CD8-positive, alpha-beta T cell (primary cell): ENCODE measurements at regions of chr5 and their contacts with region 1.

Region 1: GRCh38 chr5:132495667-132496190 is 5.2 kb upstream of the IRF1 start:
- DNase-seq: peak in 8 of 9 experiments; percentile 54 to 86 (median 70)
- ATAC-seq: peak; percentile 32
- H3K4me3 ChIP-seq: peak overlapping the region; percentile 67 to 86
- H3K4me3 Mint-ChIP-seq: peak overlapping the region; percentile 97
- H3K27ac ChIP-seq: peak overlapping the region; percentile 68 to 86
- H3K27ac Mint-ChIP-seq: peak overlapping the region; percentile 94
- H3K4me1 ChIP-seq: peaks cover 69% of the 10 kb centered on the region
- H3K4me1 Mint-ChIP-seq: peaks cover 69% of the 10 kb centered on the region
- H3K27me3 ChIP-seq: no peaks in the 10 kb centered on the region
- H3K27me3 Mint-ChIP-seq: no peaks in the 10 kb centered on the region
- CTCF ChIP-seq: no peak

Region 2: GRCh38 chr5:132394667-132395259 is 101.0 kb before region 1 on chr5:
- CTCF ChIA-PET with region 1: interaction called, 425 read pairs
- POLR2A ChIA-PET with region 1: interaction called, 10 read pairs
- intact Hi-C with region 1: no loop called
- DNase-seq: no peak
- ATAC-seq: no peak
- H3K4me3 ChIP-seq: no peak overlapping the region
- H3K4me3 Mint-ChIP-seq: no peak overlapping the region
- H3K27ac ChIP-seq: no peak overlapping the region
- H3K27ac Mint-ChIP-seq: no peak overlapping the region
- H3K4me1 ChIP-seq: peaks cover 41% of the 10 kb centered on the region
- H3K4me1 Mint-ChIP-seq: peaks cover 53% of the 10 kb centered on the region
- H3K27me3 ChIP-seq: no peaks in the 10 kb centered on the region
- H3K27me3 Mint-ChIP-seq: no peaks in the 10 kb centered on the region
- CTCF ChIP-seq: no peak

Region 3: DNA sequence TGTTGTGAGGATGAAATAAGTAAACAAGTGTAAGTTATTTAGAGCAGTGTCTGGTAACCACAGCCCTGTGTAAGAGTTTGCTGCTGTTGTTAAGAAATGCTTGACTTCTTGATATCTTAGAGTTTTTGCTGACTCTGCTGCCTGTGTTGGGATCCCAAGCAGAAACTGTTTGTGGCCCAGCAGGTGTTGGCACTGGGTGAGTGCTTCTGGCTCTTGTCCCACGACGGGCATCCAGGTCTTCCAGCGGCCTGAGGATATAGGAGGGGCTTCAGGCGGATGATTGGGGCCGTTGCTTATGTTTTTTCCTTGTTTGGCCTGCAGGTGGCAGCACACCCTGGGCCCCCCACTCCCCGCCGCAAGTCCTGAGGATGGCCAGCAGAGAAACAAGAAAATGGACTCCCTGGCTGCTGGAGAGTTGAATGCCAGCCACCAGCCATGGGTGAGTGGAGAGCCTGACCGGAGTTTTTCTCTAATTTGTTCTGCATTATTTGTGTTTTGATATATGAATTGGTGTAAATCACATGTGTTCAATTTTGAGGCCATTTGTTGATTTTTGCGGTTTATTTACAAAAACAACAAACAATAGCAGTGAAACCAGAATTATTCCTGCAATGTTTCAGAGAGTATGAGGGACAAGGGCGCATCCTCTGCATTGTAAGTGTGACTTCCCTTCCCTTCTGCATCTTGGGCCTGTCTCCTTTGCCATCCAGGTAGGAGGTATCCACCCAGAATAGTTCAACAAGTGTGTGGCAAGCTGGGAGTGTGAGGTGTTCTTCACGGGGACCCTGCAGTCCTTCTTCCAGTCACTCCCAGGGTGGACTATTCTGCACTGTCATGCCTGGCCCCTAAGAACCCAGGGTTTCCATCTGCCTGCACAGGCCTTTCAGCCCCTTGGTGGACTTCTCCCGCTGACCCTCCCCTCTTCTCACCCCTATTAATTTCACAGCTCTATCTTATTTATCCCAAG is 75.9 kb before region 1 on chr5:
- CTCF ChIA-PET with region 1: interaction called, 73 read pairs
- POLR2A ChIA-PET with region 1: interaction called, 136 read pairs
- intact Hi-C with region 1: loop called in 1 of 2 experiments (anchors 1 kb)
- DNase-seq: peak; percentile 27 to 84 (median 64)
- ATAC-seq: peak; percentile 71
- H3K4me3 ChIP-seq: peak overlapping the region; percentile 6 to 9
- H3K4me3 Mint-ChIP-seq: peak overlapping the region; percentile 80
- H3K27ac ChIP-seq: peak overlapping the region; percentile 38 to 98
- H3K27ac Mint-ChIP-seq: peak overlapping the region; percentile 94
- H3K4me1 ChIP-seq: peaks cover 82% of the 10 kb centered on the region
- H3K4me1 Mint-ChIP-seq: peaks cover 92% of the 10 kb centered on the region
- H3K27me3 ChIP-seq: no peaks in the 10 kb centered on the region
- H3K27me3 Mint-ChIP-seq: no peaks in the 10 kb centered on the region
- CTCF ChIP-seq: peak; percentile 89

Region 4: GRCh38 chr5:132456296-132457001 is 39.3 kb before region 1 on chr5:
- CTCF ChIA-PET with region 1: interaction called, 48 read pairs
- POLR2A ChIA-PET with region 1: interaction called, 173 read pairs
- intact Hi-C with region 1: loop called (anchors 1 to 5 kb)
- DNase-seq: peak in 8 of 9 experiments; percentile 53 to 90 (median 77)
- ATAC-seq: peak; percentile 55
- H3K4me3 ChIP-seq: peak overlapping the region; percentile 21 to 30
- H3K4me3 Mint-ChIP-seq: peak overlapping the region; percentile 65
- H3K27ac ChIP-seq: peak overlapping the region; percentile 89 to 91
- H3K27ac Mint-ChIP-seq: peak overlapping the region; percentile 99
- H3K4me1 ChIP-seq: peaks cover 90% of the 10 kb centered on the region
- H3K4me1 Mint-ChIP-seq: peaks cover 92% of the 10 kb centered on the region
- H3K27me3 ChIP-seq: no peaks in the 10 kb centered on the region
- H3K27me3 Mint-ChIP-seq: no peaks in the 10 kb centered on the region
- CTCF ChIP-seq: no peak

Region 5: GRCh38 chr5:132473019-132473531 is 22.7 kb before region 1 on chr5:
- CTCF ChIA-PET with region 1: interaction called, 65 read pairs
- POLR2A ChIA-PET with region 1: interaction called, 391 read pairs
- intact Hi-C with region 1: loop called in 1 of 2 experiments (anchors 1 kb)
- DNase-seq: peak; percentile 70 to 97 (median 85)
- ATAC-seq: peak; percentile 73
- H3K4me3 ChIP-seq: no peak overlapping the region
- H3K4me3 Mint-ChIP-seq: peak overlapping the region; percentile 5
- H3K27ac ChIP-seq: peak overlapping the region; percentile 52 to 93
- H3K27ac Mint-ChIP-seq: peak overlapping the region; percentile 87
- H3K4me1 ChIP-seq: peaks cover 82% of the 10 kb centered on the region
- H3K4me1 Mint-ChIP-seq: peaks cover 92% of the 10 kb centered on the region
- H3K27me3 ChIP-seq: no peaks in the 10 kb centered on the region
- H3K27me3 Mint-ChIP-seq: no peaks in the 10 kb centered on the region
- CTCF ChIP-seq: no peak

Region 6: DNA sequence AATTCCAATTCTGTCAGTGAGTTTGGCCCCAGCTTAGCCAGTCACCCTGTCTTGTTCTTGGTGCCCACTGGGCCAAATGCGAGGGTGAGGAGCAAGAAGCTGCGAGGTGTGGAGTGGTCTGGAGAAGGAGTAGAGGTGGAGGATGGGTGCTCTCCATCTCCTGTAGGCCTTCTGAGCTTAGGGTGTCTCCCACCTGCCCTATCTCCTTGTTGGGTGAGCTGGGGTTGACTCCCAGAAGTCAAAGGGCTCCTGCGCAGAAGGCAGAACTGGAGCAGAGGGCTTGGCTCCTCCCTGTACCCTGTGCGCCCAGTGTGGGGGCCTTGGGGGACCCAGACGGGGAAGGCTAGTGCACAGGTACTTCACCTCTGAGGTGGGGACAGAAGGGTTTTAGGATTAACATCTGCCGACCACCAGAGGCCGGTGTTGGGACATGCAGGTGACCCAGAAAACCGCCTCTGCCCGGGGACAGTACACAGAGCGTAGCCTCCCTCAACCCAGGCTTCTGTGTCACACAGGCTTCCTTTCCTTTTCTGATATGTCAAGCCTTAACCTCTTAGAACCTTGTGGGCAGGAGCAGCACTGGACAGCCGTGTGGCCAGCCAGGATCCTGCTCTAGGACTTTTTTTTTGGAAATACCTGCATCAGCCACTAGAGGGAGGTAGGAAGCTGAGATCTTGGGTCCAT is 30.7 kb after region 1 on chr5:
- CTCF ChIA-PET with region 1: interaction called, 12 read pairs
- POLR2A ChIA-PET with region 1: no interaction called
- intact Hi-C with region 1: no loop called
- DNase-seq: peak in 6 of 9 experiments; percentile 24 to 69 (median 49)
- ATAC-seq: peak; percentile 72
- H3K4me3 ChIP-seq: no peak overlapping the region
- H3K4me3 Mint-ChIP-seq: no peak overlapping the region
- H3K27ac ChIP-seq: no peak overlapping the region
- H3K27ac Mint-ChIP-seq: no peak overlapping the region
- H3K4me1 ChIP-seq: peaks cover 8% of the 10 kb centered on the region
- H3K4me1 Mint-ChIP-seq: peaks cover 9% of the 10 kb centered on the region
- H3K27me3 ChIP-seq: no peaks in the 10 kb centered on the region
- H3K27me3 Mint-ChIP-seq: no peaks in the 10 kb centered on the region
- CTCF ChIP-seq: peak; percentile 97